ENCODE measurements at regions of chrX and their contacts with region 1.

Region 1: DNA sequence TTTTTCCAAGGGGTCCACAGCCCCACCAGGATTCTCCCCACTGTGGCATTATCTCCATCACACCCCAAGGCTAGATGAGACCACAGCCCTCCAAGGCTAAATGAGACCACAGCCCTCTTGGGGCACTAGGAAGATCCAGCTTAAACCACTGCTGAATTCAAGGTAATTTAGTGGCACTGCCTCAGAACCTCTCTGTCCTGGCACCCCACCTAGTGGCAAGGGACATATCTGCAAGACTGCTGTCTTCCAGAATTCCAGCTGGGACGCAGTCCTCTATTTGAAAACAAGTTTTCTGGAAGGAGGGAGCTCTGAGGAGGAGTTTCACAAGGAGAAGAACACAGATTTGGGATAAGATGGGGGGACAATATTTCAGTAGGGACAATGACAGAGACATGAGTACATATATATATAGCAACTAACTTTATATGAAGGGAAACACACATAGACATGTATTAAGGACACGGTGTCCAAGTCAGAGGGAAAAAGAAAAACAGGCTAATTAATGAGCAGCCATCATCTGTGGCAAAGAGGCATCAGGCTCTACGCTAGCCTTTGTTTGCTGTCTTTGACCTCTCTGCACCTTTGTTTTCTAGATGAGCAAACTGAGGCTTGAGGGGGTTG is 9.3 kb downstream of the CETN2 start:
- DNase-seq: peak; percentile 13
- H3K4me3 ChIP-seq: no peak overlapping the region
- H3K27ac ChIP-seq: no peak overlapping the region
- H3K4me1 ChIP-seq: peaks cover 5% of the 10 kb centered on the region
- H3K27me3 ChIP-seq: no peaks in the 10 kb centered on the region
- CTCF ChIP-seq: peak; percentile 56 to 71

Region 2: GRCh38 chrX:151713859-151714258 is 1107.4 kb before region 1 on chrX:
- CTCF ChIA-PET with region 1: no interaction called
- dilution Hi-C with region 1: no loop called
- in situ Hi-C with region 1: no loop called
- intact Hi-C with region 1: loop called (anchors 1 kb)
- DNase-seq: peak; percentile 8
- H3K4me3 ChIP-seq: no peak overlapping the region
- H3K27ac ChIP-seq: no peak overlapping the region
- H3K4me1 ChIP-seq: no peaks in the 10 kb centered on the region
- H3K27me3 ChIP-seq: no peaks in the 10 kb centered on the region
- CTCF ChIP-seq: peak; percentile 29 to 60

Region 3: GRCh38 chrX:151724563-151725337 is 1096.5 kb before region 1 on chrX:
- CTCF ChIA-PET with region 1: no interaction called
- dilution Hi-C with region 1: no loop called
- in situ Hi-C with region 1: loop called in 1 of 2 experiments (anchors 25 kb)
- intact Hi-C with region 1: no loop called
- DNase-seq: no peak
- H3K4me3 ChIP-seq: no peak overlapping the region
- H3K27ac ChIP-seq: no peak overlapping the region
- H3K4me1 ChIP-seq: no peaks in the 10 kb centered on the region
- H3K27me3 ChIP-seq: no peaks in the 10 kb centered on the region
- CTCF ChIP-seq: no peak

Region 4: DNA sequence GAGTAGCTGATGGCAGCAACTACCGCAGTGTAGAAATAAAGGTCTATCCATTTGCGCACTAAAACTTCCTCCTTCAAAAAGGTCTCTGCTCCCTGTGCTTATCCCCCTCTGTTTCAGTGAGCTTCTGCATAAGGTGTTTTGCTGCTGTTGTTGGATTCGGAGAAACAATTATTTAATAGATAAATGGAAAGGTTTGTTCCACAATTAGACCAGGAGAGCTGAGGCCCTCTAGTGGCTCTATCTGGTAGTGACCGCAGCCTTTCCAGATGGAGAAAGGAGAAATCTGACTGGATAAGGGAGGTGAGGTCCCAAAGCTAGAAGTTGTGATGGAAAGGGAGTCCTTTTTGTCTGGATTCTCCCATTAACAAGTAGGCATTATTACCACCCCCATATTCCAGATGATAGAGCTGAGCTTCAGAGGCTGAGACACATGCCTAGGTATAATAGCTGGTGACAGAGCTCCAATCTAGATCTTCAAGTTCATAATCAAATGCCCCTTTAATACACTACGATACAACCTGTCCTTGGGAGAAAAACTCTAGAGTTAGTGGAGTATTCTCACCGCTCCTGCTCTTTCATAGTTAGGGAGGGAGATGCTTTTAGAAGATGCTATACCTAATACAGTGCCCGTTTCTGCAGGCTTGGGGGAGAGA is 188.7 kb before region 1 on chrX:
- CTCF ChIA-PET with region 1: no interaction called
- dilution Hi-C with region 1: no loop called
- in situ Hi-C with region 1: loop called in 1 of 2 experiments (anchors 25 kb)
- intact Hi-C with region 1: no loop called
- DNase-seq: peak; percentile 23
- H3K4me3 ChIP-seq: no peak overlapping the region
- H3K27ac ChIP-seq: no peak overlapping the region
- H3K4me1 ChIP-seq: no peaks in the 10 kb centered on the region
- H3K27me3 ChIP-seq: no peaks in the 10 kb centered on the region
- CTCF ChIP-seq: peak; percentile 79

Region 5: DNA sequence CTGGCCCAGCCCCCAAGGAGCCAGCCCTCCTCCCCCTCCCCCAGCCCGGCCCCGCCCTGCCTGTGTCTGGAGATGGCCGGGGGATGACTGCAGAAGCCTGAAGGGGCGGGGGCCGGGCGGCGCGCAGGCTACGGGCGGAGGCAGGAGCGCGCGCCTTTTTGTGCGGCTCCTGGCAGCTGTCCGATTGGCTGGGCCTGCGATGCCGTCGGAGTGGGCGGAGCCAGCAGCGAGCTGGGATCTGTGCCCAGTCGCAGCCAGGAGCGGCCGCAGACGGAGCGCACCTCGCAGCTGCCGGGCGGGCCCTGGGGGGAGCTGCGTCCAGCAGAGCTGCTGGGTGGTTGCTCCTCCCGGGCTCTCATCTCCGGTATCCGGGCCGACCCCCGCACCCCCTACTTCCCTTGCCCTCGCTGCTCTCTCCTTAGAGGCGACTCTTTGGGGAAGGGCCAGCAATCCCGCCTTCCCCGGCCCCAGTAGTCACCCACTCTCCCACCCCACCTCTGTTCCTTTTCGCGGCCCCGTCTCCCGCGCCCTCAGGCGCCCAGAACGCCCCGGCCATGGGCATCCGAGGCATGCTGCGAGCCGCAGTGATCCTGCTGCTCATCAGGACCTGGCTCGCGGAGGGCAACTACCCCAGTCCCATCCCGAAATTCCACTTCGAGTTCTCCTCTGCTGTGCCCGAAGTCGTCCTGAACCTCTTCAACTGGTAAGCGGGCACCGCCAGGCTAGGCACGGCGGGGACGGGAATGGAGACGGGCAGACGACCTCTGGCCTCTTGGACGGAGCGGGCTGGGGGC is 183.4 kb before region 1 on chrX and contains the start of gene GABRQ:
- CTCF ChIA-PET with region 1: no interaction called
- dilution Hi-C with region 1: no loop called
- in situ Hi-C with region 1: loop called in 1 of 2 experiments (anchors 25 kb)
- intact Hi-C with region 1: loop called (anchors 1 kb)
- DNase-seq: no peak
- H3K4me3 ChIP-seq: no peak within 1 kb of the TSS
- H3K27ac ChIP-seq: no peak within 1 kb of the TSS
- H3K4me1 ChIP-seq: no peaks in the 10 kb centered on the region
- H3K27me3 ChIP-seq: peaks cover 8% of the 10 kb centered on the region
- CTCF ChIP-seq: no peak
- total RNA-seq, gene GABRQ: not detected

Region 6: DNA sequence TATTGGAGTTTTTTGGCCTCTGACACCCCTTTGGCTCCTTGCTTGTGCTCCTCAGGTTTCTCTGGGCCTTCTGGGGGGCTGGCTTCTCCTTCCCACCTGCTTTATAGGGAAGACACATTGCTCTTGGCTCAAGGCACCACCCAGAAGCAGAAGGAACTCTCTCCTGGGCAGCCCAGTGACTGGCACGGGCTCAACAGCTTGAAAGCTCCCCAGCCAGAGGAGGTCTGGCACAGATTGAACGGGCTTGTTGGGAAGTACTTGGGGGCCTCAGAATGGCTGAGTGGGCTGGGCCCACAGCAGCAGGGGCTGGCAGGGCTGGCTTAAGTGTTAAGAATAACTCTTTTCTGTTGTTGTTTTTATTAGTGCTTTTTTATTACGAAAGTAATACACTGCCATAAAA is 65.5 kb after region 1 on chrX:
- CTCF ChIA-PET with region 1: no interaction called
- dilution Hi-C with region 1: no loop called
- in situ Hi-C with region 1: loop called in 1 of 2 experiments (anchors 10 kb)
- intact Hi-C with region 1: no loop called
- DNase-seq: no peak
- H3K4me3 ChIP-seq: no peak overlapping the region
- H3K27ac ChIP-seq: no peak overlapping the region
- H3K4me1 ChIP-seq: no peaks in the 10 kb centered on the region
- H3K27me3 ChIP-seq: no peaks in the 10 kb centered on the region
- CTCF ChIP-seq: no peak

Region 7: DNA sequence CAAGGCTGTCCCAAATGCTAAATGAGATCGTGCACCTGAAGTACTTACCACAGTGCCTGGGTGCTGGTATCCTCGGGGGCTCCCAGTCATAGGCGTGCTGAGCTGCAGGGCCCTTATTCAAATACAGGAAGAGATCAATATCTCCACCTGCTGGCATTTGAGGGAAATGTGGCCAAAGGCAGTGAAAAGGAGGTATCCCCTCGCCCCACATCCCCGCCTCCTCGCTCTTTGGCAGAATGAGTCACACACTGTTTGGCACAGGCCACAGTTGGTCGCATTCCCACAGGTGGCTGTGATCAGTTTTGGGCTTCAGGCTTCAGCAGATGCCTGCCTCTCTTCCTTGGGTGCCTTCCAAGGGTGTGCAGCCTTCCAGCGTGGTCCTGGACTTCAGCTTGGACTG is 105.0 kb after region 1 on chrX:
- CTCF ChIA-PET with region 1: no interaction called
- dilution Hi-C with region 1: no loop called
- in situ Hi-C with region 1: no loop called
- intact Hi-C with region 1: loop called (anchors 2 kb)
- DNase-seq: peak; percentile 68
- H3K4me3 ChIP-seq: no peak overlapping the region
- H3K27ac ChIP-seq: no peak overlapping the region
- H3K4me1 ChIP-seq: peaks cover 3% of the 10 kb centered on the region
- H3K27me3 ChIP-seq: no peaks in the 10 kb centered on the region
- CTCF ChIP-seq: peak; percentile 52 to 58

Region 8: GRCh38 chrX:153724252-153725040 is 903.2 kb after region 1 on chrX and contains the starts of genes ABCD1 and BCAP31:
- CTCF ChIA-PET with region 1: no interaction called
- dilution Hi-C with region 1: no loop called
- in situ Hi-C with region 1: no loop called
- intact Hi-C with region 1: no loop called
- DNase-seq: peak; percentile 84
- H3K4me3 ChIP-seq: peak within 1 kb of the TSS; percentile 57 to 68 (median 64)
- H3K27ac ChIP-seq: peak within 1 kb of the TSS; percentile 72
- H3K4me1 ChIP-seq: peaks cover 35% of the 10 kb centered on the region
- H3K27me3 ChIP-seq: no peaks in the 10 kb centered on the region
- CTCF ChIP-seq: no peak
- total RNA-seq, gene ABCD1: 4.0 to 5.7 TPM
- total RNA-seq, gene BCAP31: 156 to 277 TPM